ENCODE measurements at regions of chr5 and their contacts with region 1.

Region 1: GRCh38 chr5:168219515-168220410 is 71.7 kb upstream of the WWC1 start:
- DNase-seq: peak in 1 of 2 donors; percentile 76
- ATAC-seq: peak; percentile 72 to 87 (median 86)
- H3K4me3 ChIP-seq: no peak overlapping the region
- H3K4me3 Mint-ChIP-seq: peak overlapping the region; percentile 48
- H3K27ac ChIP-seq: no peak overlapping the region
- H3K27ac Mint-ChIP-seq: no peak overlapping the region
- H3K4me1 ChIP-seq: peaks cover 3% of the 10 kb centered on the region
- H3K4me1 Mint-ChIP-seq: peaks cover 10 to 12% of the 10 kb centered on the region in 2 donors
- H3K27me3 ChIP-seq: no peaks in the 10 kb centered on the region
- H3K27me3 Mint-ChIP-seq: peaks cover 2 to 3% of the 10 kb centered on the region in 2 donors
- CTCF ChIP-seq: peak; percentile 84

Region 2: DNA sequence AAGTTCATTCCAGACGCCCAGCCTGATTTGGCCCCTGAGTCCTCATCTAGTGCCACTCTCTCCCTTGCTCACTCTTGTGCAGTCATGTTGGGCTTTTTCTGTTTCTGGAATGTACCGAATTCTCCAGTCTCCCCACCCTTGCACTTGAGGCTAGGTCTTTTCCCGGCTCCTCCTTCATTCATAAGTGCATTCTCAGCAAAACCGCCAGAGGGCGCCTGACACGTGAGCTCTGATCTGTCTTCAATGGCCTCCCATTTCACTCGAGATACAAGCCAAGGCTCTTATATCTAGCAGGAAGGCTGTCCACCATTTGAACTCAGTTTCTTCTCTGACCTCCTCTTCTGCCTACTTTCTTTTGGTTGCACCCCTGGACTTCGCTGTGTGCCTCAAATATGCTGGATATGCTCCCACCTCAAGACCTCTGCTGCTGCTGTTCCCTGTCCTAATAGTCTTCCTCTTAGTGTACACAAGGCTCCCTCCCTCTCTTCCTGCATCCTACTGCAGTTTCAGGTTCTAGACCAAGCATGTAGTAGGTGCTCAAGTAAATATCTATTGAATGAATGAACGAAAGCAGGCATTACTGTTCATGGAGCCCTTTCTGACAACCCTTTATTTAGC is 496.4 kb before region 1 on chr5:
- intact Hi-C with region 1: loop called (anchors 1 kb)
- DNase-seq: peak; percentile 50 to 78
- ATAC-seq: peak; percentile 79 to 93 (median 85)
- H3K4me3 ChIP-seq: no peak overlapping the region
- H3K4me3 Mint-ChIP-seq: no peak overlapping the region
- H3K27ac ChIP-seq: no peak overlapping the region
- H3K27ac Mint-ChIP-seq: no peak overlapping the region
- H3K4me1 ChIP-seq: no peaks in the 10 kb centered on the region
- H3K4me1 Mint-ChIP-seq: peaks cover 8% of the 10 kb centered on the region in 2 donors
- H3K27me3 ChIP-seq: no peaks in the 10 kb centered on the region
- H3K27me3 Mint-ChIP-seq: peaks cover 7 to 13% of the 10 kb centered on the region in 2 donors
- CTCF ChIP-seq: peak; percentile 84

Region 3: GRCh38 chr5:168066536-168067208 is 153.1 kb before region 1 on chr5:
- intact Hi-C with region 1: no loop called
- DNase-seq: no peak
- ATAC-seq: no peak
- H3K4me3 ChIP-seq: no peak overlapping the region
- H3K4me3 Mint-ChIP-seq: no peak overlapping the region
- H3K27ac ChIP-seq: no peak overlapping the region
- H3K27ac Mint-ChIP-seq: no peak overlapping the region
- H3K4me1 ChIP-seq: no peaks in the 10 kb centered on the region
- H3K4me1 Mint-ChIP-seq: no peaks in the 10 kb centered on the region
- H3K27me3 ChIP-seq: no peaks in the 10 kb centered on the region
- H3K27me3 Mint-ChIP-seq: peaks cover 0 to 5% of the 10 kb centered on the region in 2 donors
- CTCF ChIP-seq: no peak

Region 4: DNA sequence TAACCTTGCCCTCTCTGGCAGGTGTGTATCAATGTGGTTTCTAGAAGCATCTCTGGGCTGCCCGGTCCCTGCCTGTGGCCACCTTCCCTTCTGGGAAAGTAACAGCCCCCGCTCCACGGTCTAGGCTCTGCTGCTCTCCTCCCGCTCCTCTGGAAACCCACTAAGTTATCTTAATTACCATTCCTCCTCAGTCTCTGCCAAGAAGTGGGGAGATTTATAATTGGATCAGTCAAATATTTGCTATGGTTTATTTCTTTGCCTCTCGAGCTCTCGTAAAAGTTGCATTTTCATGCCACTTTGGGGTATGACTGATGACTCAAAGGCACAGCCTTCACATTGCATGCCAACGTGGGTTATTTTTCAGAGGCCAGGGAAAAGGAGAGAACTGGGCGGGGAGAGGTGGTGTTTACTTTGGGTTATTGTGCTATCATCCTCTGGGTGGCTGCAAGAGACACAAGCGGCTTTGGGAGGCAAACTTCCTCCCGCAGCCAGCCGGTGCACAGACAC is 133.6 kb before region 1 on chr5:
- intact Hi-C with region 1: no loop called
- DNase-seq: no peak
- ATAC-seq: no peak
- H3K4me3 ChIP-seq: no peak overlapping the region
- H3K4me3 Mint-ChIP-seq: no peak overlapping the region
- H3K27ac ChIP-seq: no peak overlapping the region
- H3K27ac Mint-ChIP-seq: no peak overlapping the region
- H3K4me1 ChIP-seq: no peaks in the 10 kb centered on the region
- H3K4me1 Mint-ChIP-seq: no peaks in the 10 kb centered on the region
- H3K27me3 ChIP-seq: no peaks in the 10 kb centered on the region
- H3K27me3 Mint-ChIP-seq: peaks cover 0 to 2% of the 10 kb centered on the region in 2 donors
- CTCF ChIP-seq: no peak

Region 5: GRCh38 chr5:168114444-168115017 is 105.2 kb before region 1 on chr5:
- intact Hi-C with region 1: loop called (anchors 2 kb)
- DNase-seq: peak; percentile 17 to 55
- ATAC-seq: peak in 2 of 3 donors; percentile 49 to 58
- H3K4me3 ChIP-seq: no peak overlapping the region
- H3K4me3 Mint-ChIP-seq: no peak overlapping the region
- H3K27ac ChIP-seq: no peak overlapping the region
- H3K27ac Mint-ChIP-seq: no peak overlapping the region
- H3K4me1 ChIP-seq: no peaks in the 10 kb centered on the region
- H3K4me1 Mint-ChIP-seq: no peaks in the 10 kb centered on the region
- H3K27me3 ChIP-seq: no peaks in the 10 kb centered on the region
- H3K27me3 Mint-ChIP-seq: peaks cover 0 to 25% of the 10 kb centered on the region in 2 donors
- CTCF ChIP-seq: peak; percentile 49

Region 6: GRCh38 chr5:168531987-168532864 is 312.5 kb after region 1 on chr5:
- intact Hi-C with region 1: no loop called
- DNase-seq: no peak
- ATAC-seq: no peak
- H3K4me3 ChIP-seq: no peak overlapping the region
- H3K4me3 Mint-ChIP-seq: no peak overlapping the region
- H3K27ac ChIP-seq: no peak overlapping the region
- H3K27ac Mint-ChIP-seq: no peak overlapping the region
- H3K4me1 ChIP-seq: peaks cover 9% of the 10 kb centered on the region
- H3K4me1 Mint-ChIP-seq: peaks cover 7 to 8% of the 10 kb centered on the region in 2 donors
- H3K27me3 ChIP-seq: peaks cover 34% of the 10 kb centered on the region
- H3K27me3 Mint-ChIP-seq: peaks cover 24 to 48% of the 10 kb centered on the region in 2 donors
- CTCF ChIP-seq: no peak

Measured in natural killer cell (primary cell).